GM18951 (cell line): ENCODE measurements at regions of chr4 and their contacts with region 1.

Region 1: GRCh38 chr4:101169044-101170014 is 178.0 kb downstream of the PPP3CA start:
- POLR2A ChIP-seq: no peak

Region 2: DNA sequence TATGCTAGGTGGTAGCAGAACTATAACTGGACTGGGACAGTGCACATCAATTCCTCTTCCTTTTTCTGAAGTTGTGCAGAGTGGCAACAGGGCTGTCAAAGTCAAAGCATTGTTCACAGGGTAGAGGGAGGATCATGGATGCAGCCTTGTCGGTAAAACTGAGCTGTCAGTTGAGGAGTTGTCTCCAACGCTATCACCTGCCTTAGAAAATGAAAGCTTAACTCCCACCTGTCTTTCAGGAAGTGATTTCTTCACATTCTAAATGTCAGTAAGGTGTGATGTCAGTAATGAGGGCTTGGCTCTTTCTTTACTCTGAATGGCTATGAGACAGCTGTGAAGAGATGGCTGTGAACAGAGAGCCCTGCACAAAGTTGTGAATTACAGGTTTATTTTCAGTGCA is 554.8 kb after region 1 on chr4:
- in situ Hi-C with region 1: loop called (anchors 10 kb)
- POLR2A ChIP-seq: no peak